Sciatic nerve (tissue), 2 donors: ENCODE measurements at regions of chr4 and their contacts with region 1.

Region 1: DNA sequence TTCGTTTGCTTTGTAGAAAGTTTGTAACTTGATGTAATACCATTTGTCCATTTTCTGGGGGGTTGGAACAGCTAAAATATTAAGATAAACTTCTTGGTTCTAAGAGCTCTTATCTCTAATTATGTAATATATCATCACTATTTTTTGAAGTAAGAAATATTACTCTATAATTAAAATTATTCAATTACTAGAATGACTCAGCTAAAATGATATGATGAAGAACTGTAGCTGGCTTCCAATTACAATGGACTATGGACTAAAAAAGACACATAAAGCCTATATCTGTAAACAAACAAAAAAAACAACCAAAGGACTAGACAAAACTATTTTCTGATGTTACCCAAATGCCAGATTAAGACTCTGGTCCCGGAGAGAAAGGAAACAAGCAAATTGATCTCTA is 569.4 kb downstream of the PCDH18 start:
- DNase-seq: no peak
- ATAC-seq: no peak

Region 2: GRCh38 chr4:136590440-136590839 is 372.4 kb before region 1 on chr4:
- intact Hi-C with region 1: no loop called
- DNase-seq: no peak
- ATAC-seq: no peak

Region 3: GRCh38 chr4:137015426-137016409 is 52.9 kb after region 1 on chr4:
- intact Hi-C with region 1: no loop called
- DNase-seq: no peak
- ATAC-seq: no peak

Region 4: DNA sequence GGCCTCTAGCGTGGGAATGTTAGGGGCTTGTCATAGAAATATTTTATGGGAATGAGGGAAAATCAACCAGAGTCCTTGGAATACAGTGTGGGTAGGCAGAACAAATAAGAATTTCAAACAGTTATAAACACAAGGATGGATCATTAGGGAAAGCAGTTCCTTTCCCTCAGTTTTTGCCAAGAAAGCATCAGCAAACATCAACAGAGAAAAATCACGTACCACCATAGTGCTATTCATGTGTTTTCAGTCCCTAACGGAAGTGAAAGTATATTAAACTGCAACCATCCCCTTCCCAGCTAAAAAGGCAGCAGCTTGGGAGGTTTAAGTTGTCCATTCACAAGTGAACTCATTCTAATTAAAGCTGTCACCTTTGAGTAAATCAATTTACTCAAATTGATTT is 903.8 kb after region 1 on chr4:
- intact Hi-C with region 1: loop called (anchors 5 kb)
- DNase-seq: no peak
- ATAC-seq: no peak

Region 5: DNA sequence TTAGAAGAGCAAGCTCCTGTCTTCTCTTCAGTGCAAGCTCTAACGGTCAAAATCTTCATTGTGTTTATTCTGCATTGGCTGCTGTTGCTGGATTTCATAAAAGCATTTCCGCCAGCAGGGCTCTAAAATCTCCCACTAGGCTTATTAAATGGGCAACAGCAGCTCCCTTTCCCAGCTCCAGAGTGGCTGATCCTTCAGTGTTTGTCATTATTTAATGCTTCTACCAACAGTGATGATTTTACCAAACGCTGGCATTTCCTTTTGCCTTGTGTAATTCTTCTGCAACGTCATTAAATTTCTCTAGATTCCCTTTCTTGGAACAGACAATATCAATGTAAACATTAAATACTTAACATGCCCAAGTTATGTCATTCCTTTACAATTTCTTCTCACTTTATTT is 1259.2 kb after region 1 on chr4:
- intact Hi-C with region 1: no loop called
- DNase-seq: no peak
- ATAC-seq: no peak